Lower leg skin (tissue), 4 donors: ENCODE measurements at regions of chr4 and their contacts with region 1.

Region 1: DNA sequence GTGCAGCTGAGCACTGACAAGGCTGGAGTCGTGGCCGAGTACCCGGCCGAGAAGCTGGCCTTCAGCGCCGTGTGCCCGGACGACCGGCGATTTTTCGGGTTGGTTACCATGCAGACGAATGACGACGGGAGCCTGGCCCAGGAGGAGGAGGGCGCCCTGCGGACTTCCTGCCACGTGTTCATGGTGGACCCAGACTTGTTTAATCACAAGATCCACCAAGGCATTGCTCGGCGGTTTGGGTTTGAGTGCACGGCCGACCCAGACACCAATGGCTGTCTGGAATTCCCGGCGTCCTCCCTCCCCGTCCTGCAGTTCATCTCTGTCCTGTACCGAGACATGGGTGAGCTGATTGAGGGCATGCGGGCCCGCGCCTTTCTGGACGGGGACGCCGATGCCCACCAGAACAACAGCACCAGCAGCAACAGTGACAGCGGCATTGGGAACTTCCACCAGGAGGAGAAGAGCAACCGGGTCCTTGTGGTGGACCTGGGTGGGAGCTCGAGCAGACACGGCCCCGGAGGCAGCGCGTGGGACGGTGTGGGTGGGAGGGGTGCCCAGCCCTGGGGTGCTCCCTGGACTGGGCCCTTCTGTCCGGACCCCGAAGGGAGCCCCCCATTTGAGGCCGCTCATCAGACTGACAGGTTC is 24.3 kb downstream of the RGS12 start:
- DNase-seq: peak in 1 of 2 donors; percentile 81
- H3K4me3 ChIP-seq: no peak overlapping the region
- CTCF ChIP-seq: no peak
- POLR2A ChIP-seq: no peak

Region 2: DNA sequence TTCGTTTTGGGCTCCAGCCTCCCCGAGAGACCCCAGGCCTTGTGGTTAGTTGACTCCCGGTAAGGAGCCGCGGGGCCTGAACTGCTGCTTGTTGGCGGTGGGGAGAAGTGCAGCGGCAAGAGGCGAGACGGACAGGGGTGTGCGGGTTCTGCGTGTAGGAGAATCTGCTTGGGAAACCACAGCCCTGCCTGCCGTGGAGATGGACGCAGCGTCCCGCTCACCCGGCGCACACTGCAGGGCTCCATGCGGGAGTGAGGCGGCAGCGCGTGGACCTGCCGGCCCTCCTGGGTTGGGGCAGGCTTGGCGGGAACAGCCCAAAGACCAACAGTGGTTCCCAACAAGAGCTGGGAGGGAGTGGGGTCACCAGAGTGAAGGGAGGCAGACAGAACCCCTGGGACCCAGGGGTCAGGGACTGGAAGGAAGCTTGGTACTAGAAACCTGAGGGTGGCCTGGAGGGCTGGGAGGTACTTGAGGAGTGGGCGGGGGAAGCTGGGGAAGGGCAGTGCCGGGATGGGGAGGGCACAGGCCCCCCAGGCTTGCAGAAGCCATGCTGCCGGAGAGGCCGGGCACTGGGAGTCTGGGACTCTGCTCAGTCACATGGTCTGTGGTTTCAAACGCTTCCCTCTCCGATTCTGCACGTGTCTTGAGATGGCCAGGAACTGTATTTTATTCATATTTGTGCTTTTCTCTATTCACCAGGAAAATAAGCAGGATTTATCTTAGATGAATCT is 46.4 kb after region 1 on chr4:
- intact Hi-C with region 1: loop called (anchors 2 kb)
- DNase-seq: peak in 1 of 2 donors; percentile 14
- H3K4me3 ChIP-seq: no peak overlapping the region
- CTCF ChIP-seq: no peak
- POLR2A ChIP-seq: no peak